Left ventricle myocardium superior (tissue), 1 donor: ENCODE measurements at regions of chr2 and their contacts with region 1.

Region 1: GRCh38 chr2:86105252-86105968 is at the start of gene POLR1A:
- DNase-seq: peak; percentile 90
- ATAC-seq: peak; percentile 96
- total RNA-seq, gene POLR1A: 15.4 TPM

Region 2: GRCh38 chr2:86440631-86441391 is 335.4 kb after region 1 on chr2 and contains the start of gene KDM3A:
- intact Hi-C with region 1: loop called (anchors 10 kb)
- DNase-seq: peak; percentile 99
- ATAC-seq: peak; percentile 95
- total RNA-seq, gene KDM3A: 35.6 TPM